ENCODE measurements at regions of chr11 and their contacts with region 1.

Region 1: GRCh38 chr11:67118801-67119584 is at the start of gene KDM2A:
- DNase-seq: peak; percentile 96 to 100
- H3K4me3 ChIP-seq: peak within 1 kb of the TSS; percentile 99 to 100
- H3K27ac ChIP-seq: peak within 1 kb of the TSS; percentile 96 to 100
- H3K4me1 ChIP-seq: peaks cover 5 to 20% of the 10 kb centered on the region in 2 donors
- H3K27me3 ChIP-seq: no peaks in the 10 kb centered on the region
- CTCF ChIP-seq: no peak
- total RNA-seq, gene KDM2A: 129 TPM

Region 2: GRCh38 chr11:66530927-66531709 is 587.9 kb before region 1 on chr11:
- intact Hi-C with region 1: no loop called
- DNase-seq: no peak
- H3K4me3 ChIP-seq: no peak overlapping the region
- H3K27ac ChIP-seq: no peak overlapping the region
- H3K4me1 ChIP-seq: no peaks in the 10 kb centered on the region
- H3K27me3 ChIP-seq: no peaks in the 10 kb centered on the region
- CTCF ChIP-seq: no peak

Region 3: DNA sequence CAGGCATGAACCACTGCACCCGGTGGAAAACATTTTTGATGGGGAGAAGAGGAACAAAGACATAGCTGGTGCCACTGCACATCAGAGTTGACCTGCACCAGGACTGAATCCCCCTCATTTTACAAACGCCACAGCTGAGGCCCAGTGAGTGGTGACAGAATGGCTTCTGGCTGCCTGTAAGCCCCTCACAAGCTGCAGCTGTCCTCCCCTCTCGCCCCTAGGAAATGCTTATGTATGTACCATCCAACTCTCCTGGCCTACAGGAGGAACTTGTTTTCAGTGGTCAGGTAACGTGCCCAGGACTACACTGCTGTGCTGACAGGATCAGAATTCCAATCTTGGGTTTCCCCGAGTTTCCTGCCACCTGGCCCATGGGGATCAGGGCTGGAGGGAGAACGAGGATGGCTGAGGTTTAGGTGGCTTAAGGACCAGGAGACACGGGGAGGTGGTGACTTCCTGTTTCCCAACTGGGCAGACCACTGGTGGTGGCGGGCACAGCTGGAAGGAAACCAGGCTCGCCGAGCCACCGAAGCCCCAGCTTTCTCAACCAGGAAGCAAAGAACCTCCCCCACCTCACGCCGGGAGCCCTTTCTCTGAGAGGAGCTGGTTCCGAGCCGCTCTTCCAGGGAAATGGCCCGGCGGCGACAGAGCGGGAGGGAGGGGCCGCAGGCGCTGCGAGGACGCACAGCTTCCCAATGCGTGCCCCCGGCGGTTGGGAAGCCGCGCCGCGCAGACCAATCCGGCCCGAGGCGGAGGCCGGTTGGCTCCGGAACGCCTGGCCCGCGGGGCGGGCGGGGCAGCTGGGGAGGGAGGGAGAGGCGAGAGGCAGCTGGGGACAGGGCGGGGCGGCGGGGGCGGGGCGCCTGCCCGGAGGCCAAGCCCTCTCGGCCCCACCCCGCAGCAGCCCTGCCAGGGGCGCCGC is 263.2 kb before region 1 on chr11:
- intact Hi-C with region 1: loop called (anchors 2 kb)
- DNase-seq: peak; percentile 78 to 96
- H3K4me3 ChIP-seq: peak overlapping the region; percentile 64 to 85
- H3K27ac ChIP-seq: peak overlapping the region; percentile 75 to 92
- H3K4me1 ChIP-seq: peaks cover 4 to 6% of the 10 kb centered on the region in 2 donors
- H3K27me3 ChIP-seq: no peaks in the 10 kb centered on the region
- CTCF ChIP-seq: no peak

Region 4: DNA sequence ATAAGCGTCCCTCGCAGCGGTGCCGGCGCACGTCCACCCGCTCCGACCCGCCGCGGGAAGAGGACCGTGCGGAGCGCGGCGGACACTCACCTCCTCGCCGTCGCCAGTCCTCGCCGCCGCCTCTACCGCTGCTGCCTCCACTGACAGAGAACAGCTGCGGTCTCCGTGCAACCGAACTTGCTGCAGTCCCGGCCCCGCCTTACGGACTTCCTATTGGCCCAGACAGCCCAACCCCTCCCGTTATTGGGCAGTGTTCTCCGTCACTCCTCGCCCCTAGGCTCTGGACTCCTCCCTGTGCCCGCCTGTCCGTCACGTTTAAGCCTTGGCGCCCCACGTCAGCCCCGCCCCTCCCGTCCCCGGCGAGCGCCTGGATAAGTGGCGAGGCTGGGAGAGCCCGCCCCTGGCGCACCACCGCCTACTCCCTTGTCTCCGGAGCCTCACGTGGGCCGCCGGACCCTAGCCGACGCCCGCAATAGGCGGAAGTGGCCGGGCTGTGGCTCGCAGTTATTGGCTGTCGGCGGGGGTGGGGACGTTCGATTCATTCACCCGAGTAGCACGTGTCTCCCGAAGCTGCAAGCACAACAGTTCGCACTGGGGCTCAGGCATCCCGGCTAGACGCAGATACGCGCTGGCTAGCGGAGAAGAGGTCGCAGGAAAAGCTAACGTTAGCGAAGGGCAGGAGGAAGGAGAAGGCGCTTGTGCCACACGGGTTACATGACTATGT is 160.6 kb before region 1 on chr11 and contains the start of gene PC:
- intact Hi-C with region 1: loop called (anchors 5 kb)
- DNase-seq: peak; percentile 99 to 100
- H3K4me3 ChIP-seq: peak within 1 kb of the TSS; percentile 61 to 92
- H3K27ac ChIP-seq: peak within 1 kb of the TSS; percentile 77 to 80
- H3K4me1 ChIP-seq: peaks cover 0 to 15% of the 10 kb centered on the region in 2 donors
- H3K27me3 ChIP-seq: no peaks in the 10 kb centered on the region
- CTCF ChIP-seq: no peak
- total RNA-seq, gene PC: 13.5 TPM

Region 5: GRCh38 chr11:67039989-67040546 is 78.9 kb before region 1 on chr11:
- intact Hi-C with region 1: no loop called
- DNase-seq: no peak
- H3K4me3 ChIP-seq: no peak overlapping the region
- H3K27ac ChIP-seq: no peak overlapping the region
- H3K4me1 ChIP-seq: no peaks in the 10 kb centered on the region
- H3K27me3 ChIP-seq: no peaks in the 10 kb centered on the region
- CTCF ChIP-seq: no peak

Region 6: DNA sequence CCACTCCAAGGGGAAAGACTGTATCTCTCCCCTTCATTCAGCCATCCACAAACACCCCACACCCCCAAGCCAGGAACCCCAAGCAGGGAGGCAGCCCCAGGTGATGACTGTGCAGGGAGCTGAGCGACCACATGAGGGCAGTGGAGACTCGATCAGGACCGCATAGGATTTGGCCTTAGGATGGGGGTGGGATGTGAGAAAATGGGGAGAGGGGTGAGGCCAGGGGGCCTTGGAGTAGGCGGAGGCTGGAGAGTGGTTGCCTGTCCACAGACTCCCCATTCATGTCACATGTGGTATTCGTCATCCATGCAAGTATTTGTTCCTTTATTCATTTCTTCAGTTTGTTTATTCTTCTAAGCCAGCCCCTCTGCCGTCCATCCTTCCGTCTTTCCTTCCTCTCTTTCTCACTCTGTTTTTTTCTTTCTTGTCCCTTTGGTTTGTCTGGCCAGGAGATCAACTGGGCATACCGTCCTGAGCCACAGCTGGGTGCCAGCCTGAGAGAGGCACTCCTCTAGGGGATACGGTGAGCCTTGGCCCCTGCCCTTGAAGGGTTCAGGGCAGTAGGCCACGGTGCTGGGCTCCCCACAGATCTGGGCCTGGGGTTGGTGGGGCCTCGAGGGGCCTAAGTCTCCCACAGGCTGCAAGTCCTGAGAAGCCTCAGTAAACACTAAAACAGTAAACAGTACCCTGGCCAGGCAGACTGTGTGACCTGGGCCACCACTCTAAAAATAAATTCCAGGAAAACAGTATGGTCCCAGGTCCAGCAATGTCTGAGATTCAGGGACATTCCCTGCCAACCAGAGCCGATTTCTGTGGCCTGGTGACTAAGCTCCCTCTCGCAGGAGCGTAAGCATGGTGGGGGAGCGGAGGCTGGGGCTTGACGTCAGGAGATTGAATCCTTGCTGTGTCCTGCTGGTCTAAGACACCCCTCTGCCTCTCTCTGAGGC is 64.8 kb before region 1 on chr11:
- intact Hi-C with region 1: loop called (anchors 2 kb)
- DNase-seq: peak; percentile 44 to 82
- H3K4me3 ChIP-seq: no peak overlapping the region
- H3K27ac ChIP-seq: peak overlapping the region; percentile 81 to 89
- H3K4me1 ChIP-seq: peaks cover 11 to 27% of the 10 kb centered on the region in 2 donors
- H3K27me3 ChIP-seq: no peaks in the 10 kb centered on the region
- CTCF ChIP-seq: peak; percentile 35 to 74 (median 59)

Region 7: GRCh38 chr11:67353317-67354074 is 234.5 kb after region 1 on chr11 and contains the start of gene POLD4:
- intact Hi-C with region 1: loop called (anchors 2 kb)
- DNase-seq: peak; percentile 96 to 100
- H3K4me3 ChIP-seq: peak within 1 kb of the TSS; percentile 68 to 80
- H3K27ac ChIP-seq: peak within 1 kb of the TSS; percentile 98 to 99
- H3K4me1 ChIP-seq: peaks cover 26 to 60% of the 10 kb centered on the region in 2 donors
- H3K27me3 ChIP-seq: no peaks in the 10 kb centered on the region
- CTCF ChIP-seq: no peak
- total RNA-seq, gene POLD4: 107 TPM

Measured in ascending aorta (tissue), 2 donors.